Naive thymus-derived CD8-positive, alpha-beta T cell (primary cell): ENCODE measurements at regions of chr11 and their contacts with region 1.

Region 1: DNA sequence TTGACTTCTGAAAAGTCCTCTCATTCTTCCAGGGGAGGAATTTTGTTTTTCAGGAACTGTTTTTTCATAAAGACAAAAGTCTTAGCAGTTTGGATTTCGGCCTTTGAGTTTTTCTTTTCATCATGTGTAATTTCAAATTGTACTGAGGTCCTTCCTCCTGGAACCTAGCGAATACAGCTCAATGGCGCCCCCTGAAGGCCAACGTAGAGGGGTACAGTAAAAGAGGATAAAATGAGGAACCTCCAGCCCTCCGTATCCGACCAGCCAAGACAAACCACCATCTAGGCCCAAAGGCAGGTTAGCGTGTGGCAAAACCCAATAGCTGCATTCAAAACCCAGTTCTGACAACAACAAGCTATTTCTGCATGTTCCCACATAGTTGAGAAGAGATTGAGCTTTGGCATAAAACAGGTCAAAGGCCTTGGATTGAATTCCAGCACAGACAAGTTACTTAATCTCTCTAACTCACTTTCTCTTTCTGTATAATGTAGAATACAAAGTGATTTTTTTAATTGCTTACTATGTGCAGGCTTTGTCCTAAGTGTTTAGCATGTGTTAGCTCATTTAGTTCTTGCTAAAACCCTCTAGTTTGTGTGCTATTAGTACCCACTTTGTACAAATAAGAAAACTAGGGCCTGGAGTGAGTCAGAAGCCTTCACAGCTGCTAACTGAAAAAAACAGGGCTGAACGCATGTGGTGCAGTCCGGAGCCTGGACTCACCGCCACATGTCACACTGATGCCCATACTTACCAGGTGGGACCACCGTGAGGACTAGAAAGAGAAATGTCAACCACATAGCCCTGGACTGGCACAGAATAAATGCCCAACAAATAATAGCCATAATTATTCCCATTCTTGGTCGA is 43.2 kb upstream of the ETS1 start:
- DNase-seq: peak; percentile 76 to 95 (median 90)
- ATAC-seq: peak; percentile 70 to 81
- H3K4me3 Mint-ChIP-seq: peak overlapping the region; percentile 51 to 83 (median 76)
- H3K27ac Mint-ChIP-seq: peak overlapping the region; percentile 93 to 99 (median 95)
- H3K4me1 Mint-ChIP-seq: peaks cover 44 to 82% (median 68%) of the 10 kb centered on the region in 4 donors
- H3K27me3 Mint-ChIP-seq: peaks cover 0 to under 1% (median 0%) of the 10 kb centered on the region in 5 donors

Region 2: DNA sequence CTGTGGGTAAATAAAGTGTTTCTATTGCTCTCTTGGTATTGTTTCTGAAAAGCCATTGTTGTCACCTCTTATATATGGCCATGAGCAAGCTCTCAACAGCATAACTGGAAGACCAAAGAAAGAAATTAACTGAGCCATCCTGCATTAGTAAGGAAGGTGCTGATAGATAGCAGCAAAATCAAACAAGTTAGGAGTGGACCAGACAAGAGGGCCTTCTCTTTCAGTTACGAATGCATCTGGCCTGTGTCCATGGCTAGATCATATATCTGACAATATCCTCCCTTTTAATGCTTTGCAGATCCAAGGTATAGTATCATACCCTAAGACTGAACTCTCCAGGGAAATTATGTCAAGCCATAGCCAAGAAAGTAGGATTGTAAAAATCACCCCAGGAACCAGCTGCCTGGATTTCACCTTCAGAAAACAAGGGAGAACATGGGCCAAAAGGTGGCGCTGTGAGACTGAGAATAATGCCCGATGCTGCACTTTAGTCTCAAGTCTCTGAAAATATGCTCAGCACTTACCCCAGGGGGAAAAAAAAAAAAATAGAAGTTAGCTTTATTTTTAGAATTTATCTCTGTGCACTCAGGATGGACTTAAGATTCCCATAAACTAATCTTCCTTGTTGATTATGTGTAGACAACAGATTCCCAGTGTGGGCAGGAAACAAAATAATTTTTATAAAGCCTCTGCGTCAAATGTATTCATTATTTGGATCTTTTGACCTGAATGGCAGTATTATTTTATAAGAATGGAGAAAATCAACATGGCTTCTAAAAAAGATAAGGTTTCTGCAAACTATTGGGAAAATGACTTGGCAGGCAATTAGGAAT is 458.3 kb before region 1 on chr11:
- POLR2A ChIA-PET with region 1: interaction called, 24 read pairs
- DNase-seq: peak; percentile 67 to 90 (median 80)
- ATAC-seq: peak; percentile 73 to 87
- H3K4me3 Mint-ChIP-seq: no peak overlapping the region
- H3K27ac Mint-ChIP-seq: no peak overlapping the region
- H3K4me1 Mint-ChIP-seq: peaks cover 0 to 6% (median 0%) of the 10 kb centered on the region in 4 donors
- H3K27me3 Mint-ChIP-seq: no peaks in the 10 kb centered on the region

Region 3: GRCh38 chr11:128323381-128323780 is 307.2 kb before region 1 on chr11:
- POLR2A ChIA-PET with region 1: interaction called, 11 read pairs
- DNase-seq: peak in 6 of 10 donors; percentile 17 to 69 (median 52)
- ATAC-seq: no peak
- H3K4me3 Mint-ChIP-seq: peak overlapping the region; percentile 6 to 83 (median 76)
- H3K27ac Mint-ChIP-seq: peak overlapping the region; percentile 93 to 99 (median 98)
- H3K4me1 Mint-ChIP-seq: peaks cover 52 to 92% (median 86%) of the 10 kb centered on the region in 4 donors
- H3K27me3 Mint-ChIP-seq: no peaks in the 10 kb centered on the region

Region 4: GRCh38 chr11:128472128-128473089 is 158.2 kb before region 1 on chr11:
- POLR2A ChIA-PET with region 1: interaction called, 45 read pairs
- DNase-seq: peak in 6 of 10 donors; percentile 26 to 56 (median 50)
- ATAC-seq: peak; percentile 2 to 33
- H3K4me3 Mint-ChIP-seq: peak overlapping the region; percentile 75 to 93 (median 88)
- H3K27ac Mint-ChIP-seq: peak overlapping the region; percentile 93 to 99 (median 98)
- H3K4me1 Mint-ChIP-seq: peaks cover 67 to 100% (median 96%) of the 10 kb centered on the region in 4 donors
- H3K27me3 Mint-ChIP-seq: no peaks in the 10 kb centered on the region

Region 5: DNA sequence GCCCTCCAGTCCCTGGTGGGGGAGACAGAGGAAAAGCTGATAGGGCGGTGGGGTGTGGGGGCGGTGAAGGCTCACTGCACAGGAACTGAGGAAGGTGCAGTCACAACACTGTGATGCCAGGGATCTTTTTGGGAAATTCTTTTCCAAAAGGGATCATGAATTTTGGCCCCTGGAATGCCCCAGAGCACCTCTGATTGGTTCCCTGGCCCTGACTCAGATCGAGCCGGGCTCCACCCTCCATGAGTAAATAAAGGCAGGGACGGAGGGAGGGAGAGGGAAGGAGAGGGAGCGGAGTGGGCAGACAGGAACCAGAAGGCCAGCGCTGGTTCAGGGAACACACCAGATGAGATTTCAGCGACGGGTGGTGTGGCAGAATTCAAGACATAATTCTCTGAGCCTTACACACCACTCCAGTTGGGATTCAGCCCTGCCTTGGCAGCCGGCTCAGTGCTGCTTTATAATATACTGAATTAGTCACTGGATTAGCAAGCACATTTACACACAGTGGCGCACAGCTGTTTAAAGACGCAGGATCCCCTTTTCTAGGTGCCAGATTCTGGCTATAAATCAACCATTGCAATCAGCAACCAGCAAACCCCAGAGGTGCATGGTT is 123.5 kb before region 1 on chr11:
- POLR2A ChIA-PET with region 1: interaction called, 69 read pairs
- DNase-seq: peak in 1 of 10 donors; percentile 64
- ATAC-seq: peak; percentile 5 to 11
- H3K4me3 Mint-ChIP-seq: peak overlapping the region; percentile 87 to 99 (median 98)
- H3K27ac Mint-ChIP-seq: peak overlapping the region; percentile 93 to 99 (median 96)
- H3K4me1 Mint-ChIP-seq: peaks cover 57 to 100% (median 96%) of the 10 kb centered on the region in 4 donors
- H3K27me3 Mint-ChIP-seq: no peaks in the 10 kb centered on the region

Region 6: GRCh38 chr11:128548655-128549255 is 81.8 kb before region 1 on chr11:
- POLR2A ChIA-PET with region 1: interaction called, 53 read pairs
- DNase-seq: peak in 5 of 10 donors; percentile 14 to 49 (median 40)
- ATAC-seq: peak; percentile 26 to 32
- H3K4me3 Mint-ChIP-seq: peak overlapping the region; percentile 81 to 93 (median 88)
- H3K27ac Mint-ChIP-seq: peak overlapping the region; percentile 92 to 100 (median 95)
- H3K4me1 Mint-ChIP-seq: peaks cover 57 to 95% (median 92%) of the 10 kb centered on the region in 4 donors
- H3K27me3 Mint-ChIP-seq: no peaks in the 10 kb centered on the region

Region 7: DNA sequence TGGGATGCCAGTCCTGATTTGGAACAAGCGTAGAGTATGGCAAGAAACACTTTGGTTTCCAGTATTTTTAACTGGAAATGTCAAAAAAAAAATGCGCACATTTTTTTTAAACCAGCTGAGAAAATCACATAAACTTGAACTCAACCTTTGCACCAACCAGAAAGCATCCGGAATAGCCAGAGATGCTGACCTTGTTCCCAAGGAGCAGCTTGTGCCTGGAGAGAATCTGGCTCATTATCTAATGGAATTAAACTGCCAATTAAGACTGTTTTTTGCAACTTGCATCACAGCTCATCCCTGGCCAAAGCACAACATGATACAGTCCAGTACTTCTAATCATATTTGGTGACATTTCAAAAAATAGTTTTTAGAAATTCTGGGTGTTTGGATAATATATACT is 34.8 kb before region 1 on chr11:
- POLR2A ChIA-PET with region 1: no interaction called
- DNase-seq: no peak
- ATAC-seq: no peak
- H3K4me3 Mint-ChIP-seq: no peak overlapping the region
- H3K27ac Mint-ChIP-seq: peak overlapping the region in 1 of 10 donors; percentile 39
- H3K4me1 Mint-ChIP-seq: peaks cover 12 to 47% (median 24%) of the 10 kb centered on the region in 4 donors
- H3K27me3 Mint-ChIP-seq: no peaks in the 10 kb centered on the region

Region 8: DNA sequence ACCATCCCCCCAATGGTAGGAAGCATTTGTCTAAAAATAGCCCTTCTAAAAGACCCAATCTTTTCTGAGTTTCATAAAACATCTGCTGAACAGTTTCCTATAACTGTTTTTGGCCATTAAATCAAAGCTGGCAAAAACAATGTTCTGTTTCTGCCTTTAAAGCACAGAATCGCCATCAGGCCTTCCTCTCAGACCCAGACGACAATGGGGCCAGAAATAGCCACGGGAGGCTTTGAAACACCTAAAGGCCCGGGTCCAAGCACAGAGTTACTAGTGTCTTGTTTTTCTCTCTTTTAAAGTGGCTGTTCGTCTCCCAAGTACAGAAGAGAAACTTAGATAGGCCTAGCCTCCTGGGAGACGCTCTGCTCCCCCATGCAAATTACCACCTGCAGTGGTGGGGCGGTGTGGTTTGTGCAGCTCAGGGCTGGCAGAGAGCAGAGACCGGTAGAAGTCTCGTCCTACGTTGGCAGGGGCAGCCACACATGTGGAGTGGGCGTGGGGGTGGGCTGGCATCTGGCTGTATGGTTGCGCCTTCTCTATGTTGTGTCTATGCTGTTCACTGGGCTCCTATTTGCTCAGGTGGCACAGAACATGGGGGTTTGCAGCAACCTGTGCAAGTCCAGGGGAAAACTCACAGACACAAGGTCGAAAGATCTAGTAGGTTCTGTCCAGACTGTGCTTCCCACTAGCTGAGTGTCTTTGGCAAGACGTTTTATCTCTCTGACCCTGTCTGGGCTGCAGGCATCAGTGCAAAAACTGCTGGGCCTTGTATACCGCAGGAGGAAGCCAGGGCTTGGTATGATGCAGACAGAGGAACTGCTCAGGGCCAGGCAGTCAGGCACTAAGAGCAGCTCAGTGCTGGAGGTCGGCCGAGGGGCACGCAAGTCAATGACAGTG is 19.6 kb before region 1 on chr11:
- POLR2A ChIA-PET with region 1: interaction called, 268 read pairs
- DNase-seq: peak; percentile 48 to 90 (median 77)
- ATAC-seq: peak; percentile 89 to 93
- H3K4me3 Mint-ChIP-seq: peak overlapping the region; percentile 59 to 85 (median 72)
- H3K27ac Mint-ChIP-seq: peak overlapping the region; percentile 94 to 99 (median 97)
- H3K4me1 Mint-ChIP-seq: peaks cover 49 to 92% (median 82%) of the 10 kb centered on the region in 4 donors
- H3K27me3 Mint-ChIP-seq: peaks cover 0 to 1% (median 0%) of the 10 kb centered on the region in 5 donors